T-cell (primary cell): ENCODE measurements at regions of chr10 and their contacts with region 1.

Region 1: DNA sequence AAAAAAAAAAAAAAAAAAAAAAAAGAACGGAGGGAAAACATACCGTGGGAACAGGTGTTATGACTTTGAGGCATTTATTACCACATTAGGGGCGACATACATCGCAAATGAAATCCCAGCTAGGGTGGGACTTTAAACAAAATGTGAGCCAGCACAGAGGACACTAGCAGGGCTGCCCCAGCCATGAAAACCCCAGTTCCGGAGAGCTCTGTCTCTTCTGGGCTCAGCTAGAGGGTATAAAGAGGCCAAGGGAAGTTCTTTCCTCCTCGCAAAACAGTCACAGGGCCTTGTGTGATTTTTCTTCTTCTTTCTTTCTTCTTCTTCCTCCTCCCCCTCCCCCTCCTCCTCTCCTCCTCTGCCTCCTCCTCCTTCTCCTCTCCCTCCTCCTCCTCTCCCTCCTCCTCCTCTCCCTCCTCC is 59.9 kb upstream of the ECHDC3 start:
- DNase-seq: peak in 1 of 35 experiments; percentile 10
- ATAC-seq: no peak
- H3K4me3 ChIP-seq: no peak overlapping the region
- H3K4me3 Mint-ChIP-seq: peak overlapping the region in 1 of 3 donors; percentile 61
- H3K27ac ChIP-seq: no peak overlapping the region
- H3K27ac Mint-ChIP-seq: no peak overlapping the region
- H3K4me1 ChIP-seq: peaks cover 44 to 52% of the 10 kb centered on the region in 2 experiments
- H3K4me1 Mint-ChIP-seq: peaks cover 45 to 60% (median 53%) of the 10 kb centered on the region in 3 donors
- H3K27me3 ChIP-seq: peaks cover 0 to 10% of the 10 kb centered on the region in 2 experiments
- H3K27me3 Mint-ChIP-seq: peaks cover 0 to 3% of the 10 kb centered on the region in 2 donors

Region 2: GRCh38 chr10:11510736-11511135 is 171.5 kb before region 1 on chr10:
- CTCF ChIA-PET with region 1: no interaction called
- POLR2A ChIA-PET with region 1: no interaction called
- DNase-seq: no peak
- ATAC-seq: no peak
- H3K4me3 ChIP-seq: no peak overlapping the region
- H3K4me3 Mint-ChIP-seq: no peak overlapping the region
- H3K27ac ChIP-seq: no peak overlapping the region
- H3K27ac Mint-ChIP-seq: no peak overlapping the region
- H3K4me1 ChIP-seq: no peaks in the 10 kb centered on the region
- H3K4me1 Mint-ChIP-seq: peaks cover 4% of the 10 kb centered on the region in 3 donors
- H3K27me3 ChIP-seq: no peaks in the 10 kb centered on the region
- H3K27me3 Mint-ChIP-seq: no peaks in the 10 kb centered on the region

Region 3: GRCh38 chr10:11551916-11552602 is 130.2 kb before region 1 on chr10:
- CTCF ChIA-PET with region 1: no interaction called
- POLR2A ChIA-PET with region 1: no interaction called
- DNase-seq: no peak
- ATAC-seq: peak in 2 of 4 experiments; percentile 53 to 57
- H3K4me3 ChIP-seq: no peak overlapping the region
- H3K4me3 Mint-ChIP-seq: no peak overlapping the region
- H3K27ac ChIP-seq: no peak overlapping the region
- H3K27ac Mint-ChIP-seq: no peak overlapping the region
- H3K4me1 ChIP-seq: no peaks in the 10 kb centered on the region
- H3K4me1 Mint-ChIP-seq: peaks cover 11 to 33% (median 29%) of the 10 kb centered on the region in 3 donors
- H3K27me3 ChIP-seq: no peaks in the 10 kb centered on the region
- H3K27me3 Mint-ChIP-seq: peaks cover 0 to 3% of the 10 kb centered on the region in 2 donors

Region 4: DNA sequence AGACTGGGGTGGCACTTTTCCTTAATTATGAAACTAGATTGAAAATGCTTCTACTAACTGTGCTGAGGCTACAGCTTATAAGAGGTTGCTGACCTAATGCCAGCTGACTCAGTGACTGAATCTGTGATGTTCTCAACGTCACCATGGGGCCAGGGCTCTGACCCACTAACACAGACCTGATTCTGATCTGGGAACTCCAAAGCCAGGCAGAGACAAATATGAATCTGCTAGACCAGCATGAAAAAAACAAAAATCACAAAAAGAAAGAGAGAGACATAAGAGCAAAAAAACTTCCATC is 86.9 kb before region 1 on chr10:
- CTCF ChIA-PET with region 1: no interaction called
- POLR2A ChIA-PET with region 1: no interaction called
- DNase-seq: no peak
- ATAC-seq: no peak
- H3K4me3 ChIP-seq: no peak overlapping the region
- H3K4me3 Mint-ChIP-seq: no peak overlapping the region
- H3K27ac ChIP-seq: no peak overlapping the region
- H3K27ac Mint-ChIP-seq: peak overlapping the region in 1 of 2 donors; percentile 4
- H3K4me1 ChIP-seq: peaks cover 0 to 2% of the 10 kb centered on the region in 2 experiments
- H3K4me1 Mint-ChIP-seq: peaks cover 4 to 19% (median 14%) of the 10 kb centered on the region in 3 donors
- H3K27me3 ChIP-seq: no peaks in the 10 kb centered on the region
- H3K27me3 Mint-ChIP-seq: no peaks in the 10 kb centered on the region

Region 5: DNA sequence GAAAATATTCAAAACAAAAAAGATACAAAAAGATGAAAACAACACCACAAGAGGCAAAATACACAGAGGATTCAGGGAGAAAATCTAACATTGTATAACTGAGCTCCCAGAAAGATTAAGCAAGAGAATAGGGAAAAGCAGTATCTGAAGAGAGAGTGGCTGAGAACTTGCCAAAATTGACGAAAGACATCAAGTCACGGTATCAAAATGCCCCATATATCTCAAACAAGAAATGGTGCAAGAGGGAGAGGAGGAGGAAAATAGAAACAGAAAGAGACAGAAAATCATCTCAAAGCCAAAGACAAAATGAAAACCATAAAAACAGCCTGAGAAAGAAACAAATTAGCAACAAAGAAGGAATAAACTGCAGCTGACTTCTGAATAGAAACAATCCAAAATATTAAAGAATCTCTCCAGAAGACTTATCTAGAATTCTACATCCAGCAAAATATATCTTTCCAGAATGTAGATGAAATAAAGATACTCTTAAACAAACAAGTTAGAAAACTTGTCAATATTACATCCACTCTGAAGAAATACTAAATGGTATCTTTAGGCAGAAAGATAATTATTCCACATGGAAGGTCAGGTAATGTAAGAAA is 76.4 kb before region 1 on chr10:
- CTCF ChIA-PET with region 1: no interaction called
- POLR2A ChIA-PET with region 1: no interaction called
- DNase-seq: no peak
- ATAC-seq: no peak
- H3K4me3 ChIP-seq: no peak overlapping the region
- H3K4me3 Mint-ChIP-seq: no peak overlapping the region
- H3K27ac ChIP-seq: no peak overlapping the region
- H3K27ac Mint-ChIP-seq: no peak overlapping the region
- H3K4me1 ChIP-seq: peaks cover 5 to 9% of the 10 kb centered on the region in 2 experiments
- H3K4me1 Mint-ChIP-seq: peaks cover 59 to 72% (median 68%) of the 10 kb centered on the region in 3 donors
- H3K27me3 ChIP-seq: peaks cover 0 to 2% of the 10 kb centered on the region in 2 experiments
- H3K27me3 Mint-ChIP-seq: no peaks in the 10 kb centered on the region

Region 6: GRCh38 chr10:11741608-11742004 is 59.3 kb after region 1 on chr10:
- CTCF ChIA-PET with region 1: interaction called in 1 of 2 experiments, 11 read pairs
- POLR2A ChIA-PET with region 1: no interaction called
- DNase-seq: no peak
- ATAC-seq: no peak
- H3K4me3 ChIP-seq: peak overlapping the region; percentile 51 to 71
- H3K4me3 Mint-ChIP-seq: peak overlapping the region; percentile 70 to 75 (median 74)
- H3K27ac ChIP-seq: no peak overlapping the region
- H3K27ac Mint-ChIP-seq: no peak overlapping the region
- H3K4me1 ChIP-seq: peaks cover 0 to 13% of the 10 kb centered on the region in 2 experiments
- H3K4me1 Mint-ChIP-seq: peaks cover 7 to 10% (median 7%) of the 10 kb centered on the region in 3 donors
- H3K27me3 ChIP-seq: peaks cover 0 to 39% of the 10 kb centered on the region in 2 experiments
- H3K27me3 Mint-ChIP-seq: peaks cover 9 to 44% of the 10 kb centered on the region in 2 donors